ENCODE measurements at regions of chr11 and their contacts with region 1.

Region 1: DNA sequence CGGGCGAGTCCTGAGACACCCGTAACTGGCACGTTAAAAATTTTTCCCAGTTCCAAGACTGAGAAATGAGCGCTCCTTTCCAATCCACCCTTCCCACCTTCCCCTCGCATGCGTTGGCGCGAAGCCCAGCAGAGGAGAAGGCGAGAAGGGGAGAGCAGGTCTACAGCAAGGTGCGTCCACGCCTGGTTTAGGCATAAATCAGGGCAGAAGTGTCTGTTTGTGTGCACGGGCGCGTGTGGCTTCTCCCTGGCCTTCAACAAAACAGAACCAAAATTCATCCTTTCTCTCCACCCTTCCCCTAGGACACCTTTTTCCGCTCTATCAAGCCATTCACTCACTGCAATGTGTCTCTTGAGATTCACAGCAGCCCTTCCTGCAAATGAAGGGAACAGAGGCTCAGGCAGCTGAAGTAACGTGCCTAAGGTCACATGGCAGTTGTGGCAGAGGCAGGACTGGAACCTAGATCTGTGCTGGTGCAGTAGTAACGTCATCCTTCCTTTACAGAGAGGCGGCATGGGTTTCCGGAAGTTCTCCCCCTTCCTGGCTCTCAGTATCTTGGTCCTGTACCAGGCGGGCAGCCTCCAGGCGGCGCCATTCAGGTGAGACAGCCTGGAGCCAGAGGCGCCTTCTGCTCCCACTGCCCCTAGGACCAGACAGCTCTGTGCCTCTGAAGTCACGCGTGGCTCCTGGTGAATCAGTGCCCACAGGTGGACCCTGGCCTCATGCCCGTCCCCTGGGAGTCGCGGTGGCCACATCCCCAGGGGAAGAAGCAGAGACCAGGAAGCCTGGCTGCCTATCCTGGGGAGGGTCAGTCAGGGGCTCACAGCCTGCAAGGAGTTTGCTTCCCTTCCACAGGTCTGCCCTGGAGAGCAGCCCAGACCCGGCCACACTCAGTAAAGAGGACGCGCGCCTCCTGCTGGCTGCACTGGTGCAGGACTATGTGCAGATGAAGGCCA is 1.1 kb downstream of the CALCB start:
- DNase-seq: peak; percentile 89
- ATAC-seq: peak; percentile 90
- H3K4me3 Mint-ChIP-seq: peak overlapping the region; percentile 69
- H3K27ac Mint-ChIP-seq: no peak overlapping the region
- H3K4me1 Mint-ChIP-seq: peaks cover 23% of the 10 kb centered on the region
- H3K27me3 Mint-ChIP-seq: peaks cover 14% of the 10 kb centered on the region

Region 2: DNA sequence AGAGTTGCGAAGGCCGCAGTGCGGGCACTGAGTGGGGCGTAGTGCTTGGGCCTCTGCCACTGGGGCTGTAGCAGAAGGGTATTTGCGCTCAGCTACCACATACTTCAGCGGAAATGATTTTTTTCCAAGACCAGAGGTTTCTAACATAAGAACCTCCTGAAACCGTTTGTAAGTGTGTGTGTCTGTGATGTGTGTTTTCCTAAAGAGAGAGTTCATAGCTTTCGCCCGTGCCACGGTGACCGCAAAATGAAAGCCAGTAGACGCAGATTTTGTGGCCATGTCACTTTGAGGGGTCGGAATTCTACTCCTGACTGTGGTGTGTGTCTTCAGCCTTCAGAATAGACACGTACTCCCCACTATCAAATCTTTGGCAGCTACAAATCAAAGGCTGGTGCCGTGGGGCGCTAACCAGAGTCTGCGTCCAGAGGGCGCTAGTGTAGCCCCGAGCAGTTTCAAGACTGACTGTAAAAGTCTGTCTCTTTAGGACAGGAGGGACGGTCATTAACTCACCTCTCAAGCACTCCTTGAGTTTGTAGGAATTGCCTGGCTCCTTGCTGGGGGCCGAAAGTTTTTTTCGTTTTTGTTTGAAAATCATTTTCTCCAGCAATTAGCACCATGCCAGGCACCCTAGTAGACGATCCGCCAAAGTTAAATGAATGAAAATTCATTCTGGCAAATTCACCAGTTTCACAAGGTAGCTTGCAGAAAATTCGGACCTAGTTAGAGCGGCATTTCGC is 99.8 kb before region 1 on chr11:
- CTCF ChIA-PET with region 1: interaction called, 67 read pairs
- POLR2A ChIA-PET with region 1: no interaction called
- DNase-seq: peak; percentile 76
- ATAC-seq: peak; percentile 71
- H3K4me3 Mint-ChIP-seq: peak overlapping the region; percentile 65
- H3K27ac Mint-ChIP-seq: no peak overlapping the region
- H3K4me1 Mint-ChIP-seq: peaks cover 31% of the 10 kb centered on the region
- H3K27me3 Mint-ChIP-seq: peaks cover 74% of the 10 kb centered on the region

Region 3: GRCh38 chr11:15006139-15006759 is 68.2 kb before region 1 on chr11:
- CTCF ChIA-PET with region 1: interaction called, 28 read pairs
- POLR2A ChIA-PET with region 1: no interaction called
- DNase-seq: no peak
- ATAC-seq: peak; percentile 65
- H3K4me3 Mint-ChIP-seq: no peak overlapping the region
- H3K27ac Mint-ChIP-seq: no peak overlapping the region
- H3K4me1 Mint-ChIP-seq: no peaks in the 10 kb centered on the region
- H3K27me3 Mint-ChIP-seq: peaks cover 35% of the 10 kb centered on the region

Region 4: DNA sequence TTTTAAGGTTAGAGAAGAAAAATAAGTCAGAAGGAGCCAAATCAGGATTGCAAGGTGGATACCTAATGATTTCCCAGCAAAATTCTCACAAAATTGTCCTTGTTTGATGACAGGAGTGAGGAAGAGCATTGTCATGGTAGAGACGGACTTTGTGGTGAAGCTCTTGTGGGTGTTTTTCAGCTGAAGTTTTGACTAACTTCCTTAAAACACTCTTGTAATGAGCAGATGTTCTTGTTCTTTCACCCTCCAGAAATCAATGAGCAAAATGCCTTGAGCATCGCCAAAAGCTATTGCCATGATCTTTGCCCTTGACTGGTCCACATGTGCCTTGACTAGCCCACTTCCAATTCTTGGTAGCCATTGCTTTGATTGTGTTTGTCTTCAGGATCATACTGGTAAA is 18.9 kb after region 1 on chr11:
- CTCF ChIA-PET with region 1: interaction called, 34 read pairs
- POLR2A ChIA-PET with region 1: no interaction called
- DNase-seq: no peak
- ATAC-seq: no peak
- H3K4me3 Mint-ChIP-seq: no peak overlapping the region
- H3K27ac Mint-ChIP-seq: no peak overlapping the region
- H3K4me1 Mint-ChIP-seq: no peaks in the 10 kb centered on the region
- H3K27me3 Mint-ChIP-seq: peaks cover 28% of the 10 kb centered on the region

Region 5: GRCh38 chr11:15118431-15118830 is 43.9 kb after region 1 on chr11:
- CTCF ChIA-PET with region 1: interaction called, 15 read pairs
- POLR2A ChIA-PET with region 1: interaction called, 3 read pairs
- DNase-seq: peak; percentile 48
- ATAC-seq: peak; percentile 80
- H3K4me3 Mint-ChIP-seq: no peak overlapping the region
- H3K27ac Mint-ChIP-seq: peak overlapping the region; percentile 45
- H3K4me1 Mint-ChIP-seq: peaks cover 44% of the 10 kb centered on the region
- H3K27me3 Mint-ChIP-seq: peaks cover 38% of the 10 kb centered on the region

Region 6: GRCh38 chr11:15185021-15185420 is 110.5 kb after region 1 on chr11:
- CTCF ChIA-PET with region 1: no interaction called
- POLR2A ChIA-PET with region 1: no interaction called
- DNase-seq: no peak
- ATAC-seq: no peak
- H3K4me3 Mint-ChIP-seq: no peak overlapping the region
- H3K27ac Mint-ChIP-seq: no peak overlapping the region
- H3K4me1 Mint-ChIP-seq: no peaks in the 10 kb centered on the region
- H3K27me3 Mint-ChIP-seq: peaks cover 13% of the 10 kb centered on the region